Activated naive CD4-positive, alpha-beta T cell treated with anti-CD3 and anti-CD28 coated beads for 36 hours (primary cell): ENCODE measurements at regions of chr12 and their contacts with region 1.

Region 1: GRCh38 chr12:121399391-121400331 is at the start of gene RNF34:
- DNase-seq: peak; percentile 99
- H3K4me3 Mint-ChIP-seq: peak within 1 kb of the TSS; percentile 87
- H3K27ac Mint-ChIP-seq: peak within 1 kb of the TSS; percentile 93
- H3K4me1 Mint-ChIP-seq: peaks cover 32% of the 10 kb centered on the region
- H3K27me3 Mint-ChIP-seq: no peaks in the 10 kb centered on the region
- total RNA-seq, gene RNF34: 54.1 to 57.0 TPM

Region 2: DNA sequence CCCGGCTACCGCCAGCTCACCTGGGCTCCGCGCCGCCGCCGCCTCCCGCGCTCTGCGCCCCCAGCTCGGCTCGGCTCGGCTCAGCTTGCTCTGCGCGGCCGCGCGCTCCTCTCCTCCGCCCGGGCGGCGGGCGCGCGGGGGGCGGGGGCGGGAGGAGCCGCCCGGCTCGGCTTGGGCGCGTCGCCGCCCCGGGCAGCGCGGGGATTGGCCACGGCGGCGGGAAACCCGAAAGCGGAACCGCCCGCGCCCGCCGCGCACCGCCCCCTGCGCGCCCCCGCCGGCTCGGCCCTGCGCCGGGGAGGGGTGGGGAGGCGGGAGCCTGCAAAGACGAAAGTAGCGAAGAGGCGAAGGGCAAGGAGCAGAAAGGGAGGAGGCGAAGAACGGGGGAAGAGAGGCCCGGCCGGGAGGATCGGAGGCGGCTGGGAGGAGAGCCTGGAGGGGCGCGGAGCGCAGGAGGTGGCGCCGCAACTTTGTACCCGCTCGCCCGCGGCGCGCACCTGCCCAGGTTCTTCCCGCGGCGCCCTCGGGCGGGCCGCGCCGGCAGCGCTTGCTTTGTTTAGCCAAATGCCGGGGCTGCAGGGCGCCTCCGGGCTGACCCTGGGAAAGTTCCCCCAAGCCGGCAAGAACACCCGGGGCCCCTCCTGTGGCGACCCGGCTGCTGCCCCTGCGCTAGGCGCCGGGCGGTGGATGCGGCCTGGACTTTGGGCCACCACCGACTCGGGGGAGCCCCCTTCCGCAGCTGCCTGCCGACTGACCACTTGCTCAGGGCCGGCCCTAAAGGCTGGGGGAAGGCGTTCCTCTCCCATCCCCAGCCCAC is 102.8 kb before region 1 on chr12 and contains the start of gene CAMKK2:
- CTCF ChIA-PET with region 1: interaction called, 3 read pairs
- intact Hi-C with region 1: loop called (anchors 1 kb)
- DNase-seq: peak; percentile 82
- H3K4me3 Mint-ChIP-seq: peak within 1 kb of the TSS; percentile 90
- H3K27ac Mint-ChIP-seq: peak within 1 kb of the TSS; percentile 65
- H3K4me1 Mint-ChIP-seq: peaks cover 24% of the 10 kb centered on the region
- H3K27me3 Mint-ChIP-seq: no peaks in the 10 kb centered on the region
- total RNA-seq, gene CAMKK2: 14.8 to 18.8 TPM

Region 3: GRCh38 chr12:121351820-121352681 is 47.6 kb before region 1 on chr12 and contains the start of gene ANAPC5:
- CTCF ChIA-PET with region 1: interaction called, 8 read pairs
- intact Hi-C with region 1: loop called (anchors 1 kb)
- DNase-seq: peak; percentile 96
- H3K4me3 Mint-ChIP-seq: peak within 1 kb of the TSS; percentile 98
- H3K27ac Mint-ChIP-seq: peak within 1 kb of the TSS; percentile 86
- H3K4me1 Mint-ChIP-seq: peaks cover 25% of the 10 kb centered on the region
- H3K27me3 Mint-ChIP-seq: no peaks in the 10 kb centered on the region
- total RNA-seq, gene ANAPC5: 117 to 119 TPM

Region 4: DNA sequence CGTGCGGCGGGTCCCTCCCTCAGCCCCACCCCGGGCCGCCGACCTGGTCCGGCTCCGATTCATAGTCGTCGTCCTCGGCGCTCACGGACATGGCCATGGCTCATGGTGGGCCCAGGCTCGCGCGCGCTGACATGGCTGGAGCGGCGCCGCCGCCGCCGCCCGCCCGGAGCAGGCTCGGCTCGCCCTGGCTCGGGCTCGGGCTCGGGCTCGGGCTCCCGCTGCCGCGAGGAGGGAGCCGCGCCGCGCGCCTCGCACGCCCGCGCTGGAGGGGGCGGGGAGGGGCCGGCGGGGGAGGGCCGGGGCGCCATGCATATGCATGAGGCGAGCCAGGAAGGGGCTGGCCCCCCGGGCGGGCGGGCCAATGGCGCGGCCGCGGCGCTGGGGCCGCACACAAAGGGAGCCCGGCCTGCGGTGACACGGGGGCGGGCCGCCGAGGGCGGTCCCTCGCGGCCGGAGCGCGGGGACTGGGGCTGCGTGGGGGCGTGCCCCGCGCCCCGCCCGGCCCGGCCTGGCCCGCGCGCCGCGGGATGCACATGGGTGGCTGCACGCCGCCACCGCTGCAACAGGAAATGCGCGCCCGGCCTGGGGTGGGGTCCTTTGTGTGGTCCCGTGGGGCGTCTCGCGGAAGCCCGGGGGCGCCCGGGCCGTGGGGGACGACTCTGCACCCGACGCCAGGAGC is 67.6 kb after region 1 on chr12:
- CTCF ChIA-PET with region 1: no interaction called
- intact Hi-C with region 1: loop called (anchors 1 kb)
- DNase-seq: peak; percentile 87
- H3K4me3 Mint-ChIP-seq: peak overlapping the region; percentile 43
- H3K27ac Mint-ChIP-seq: no peak overlapping the region
- H3K4me1 Mint-ChIP-seq: peaks cover 19% of the 10 kb centered on the region
- H3K27me3 Mint-ChIP-seq: no peaks in the 10 kb centered on the region

Region 5: DNA sequence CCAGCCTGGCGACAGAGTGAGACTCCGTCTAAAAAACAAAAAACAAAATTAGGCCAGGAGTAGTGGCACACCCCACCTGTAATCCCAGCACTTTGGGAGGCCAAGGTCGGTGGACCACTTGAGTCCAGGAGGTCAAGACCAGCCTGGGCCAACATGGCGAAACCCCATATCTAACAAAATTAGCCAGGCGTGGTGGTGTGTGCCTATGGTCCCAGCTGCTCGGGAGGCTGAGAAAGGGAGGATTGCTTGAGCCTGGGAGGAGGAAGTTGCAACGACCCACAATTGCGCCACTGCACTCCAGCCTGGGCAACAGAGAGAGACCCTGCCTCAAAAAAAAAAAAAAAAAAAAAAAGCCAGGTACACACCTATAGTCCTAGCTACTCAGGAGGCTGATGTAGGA is 144.1 kb after region 1 on chr12:
- CTCF ChIA-PET with region 1: no interaction called
- intact Hi-C with region 1: no loop called
- DNase-seq: no peak
- H3K4me3 Mint-ChIP-seq: no peak overlapping the region
- H3K27ac Mint-ChIP-seq: no peak overlapping the region
- H3K4me1 Mint-ChIP-seq: peaks cover 1% of the 10 kb centered on the region
- H3K27me3 Mint-ChIP-seq: no peaks in the 10 kb centered on the region

Region 6: GRCh38 chr12:121590476-121591143 is 190.9 kb after region 1 on chr12:
- CTCF ChIA-PET with region 1: no interaction called
- intact Hi-C with region 1: loop called (anchors 2 kb)
- DNase-seq: peak; percentile 80
- H3K4me3 Mint-ChIP-seq: peak overlapping the region; percentile 85
- H3K27ac Mint-ChIP-seq: peak overlapping the region; percentile 96
- H3K4me1 Mint-ChIP-seq: peaks cover 30% of the 10 kb centered on the region
- H3K27me3 Mint-ChIP-seq: no peaks in the 10 kb centered on the region